HEK293 (cell line): ENCODE measurements at regions of chr17 and their contacts with region 1.

Region 1: DNA sequence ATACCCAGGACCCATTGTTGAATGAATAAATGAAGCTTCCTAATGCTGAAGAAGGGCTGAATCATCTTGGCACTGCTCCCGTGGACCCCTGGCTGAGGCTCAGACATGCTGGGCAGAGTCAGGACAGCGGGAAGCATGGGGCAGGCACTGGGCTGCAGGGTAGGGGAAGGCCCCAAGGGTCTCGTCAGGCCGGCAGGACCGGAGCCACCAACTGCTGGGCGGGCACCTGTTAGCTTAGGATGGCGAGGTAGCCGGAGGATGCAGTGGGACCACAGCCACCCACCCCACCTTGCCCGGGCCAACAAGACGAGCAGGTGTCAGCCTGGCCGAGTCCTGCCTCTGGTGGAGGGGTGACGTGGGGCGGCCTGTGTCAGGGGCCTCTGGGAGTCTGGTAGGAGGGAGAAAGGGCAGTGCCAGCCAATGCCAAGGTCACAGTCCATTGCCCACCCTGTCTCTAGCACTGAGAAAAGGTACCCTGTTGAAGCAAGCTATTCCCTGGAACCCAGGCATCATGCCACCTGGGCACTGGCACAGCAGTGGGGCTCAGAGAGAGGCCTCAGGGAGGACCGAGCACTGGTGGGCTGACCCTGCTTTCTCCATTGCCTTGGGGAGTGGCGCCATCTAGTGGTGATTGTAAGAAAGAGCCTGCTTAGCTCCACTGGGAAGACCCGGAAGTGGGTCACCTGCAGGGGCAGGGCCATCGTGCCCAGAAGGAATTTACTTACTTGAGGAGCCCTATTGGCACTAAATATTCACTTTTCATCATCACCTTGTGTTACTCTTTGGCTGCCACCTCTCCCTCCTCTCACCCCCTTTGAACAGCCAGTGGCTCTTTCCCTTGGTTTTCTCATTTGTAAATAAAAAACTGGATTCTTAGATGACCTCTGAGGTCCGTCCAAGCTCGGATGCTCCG is 3.0 kb upstream of the DLX3 start:
- H3K4me3 ChIP-seq: no peak overlapping the region
- H3K27ac ChIP-seq: no peak overlapping the region
- H3K4me1 ChIP-seq: peaks cover 4% of the 10 kb centered on the region
- CTCF ChIP-seq: peak; percentile 95

Region 2: DNA sequence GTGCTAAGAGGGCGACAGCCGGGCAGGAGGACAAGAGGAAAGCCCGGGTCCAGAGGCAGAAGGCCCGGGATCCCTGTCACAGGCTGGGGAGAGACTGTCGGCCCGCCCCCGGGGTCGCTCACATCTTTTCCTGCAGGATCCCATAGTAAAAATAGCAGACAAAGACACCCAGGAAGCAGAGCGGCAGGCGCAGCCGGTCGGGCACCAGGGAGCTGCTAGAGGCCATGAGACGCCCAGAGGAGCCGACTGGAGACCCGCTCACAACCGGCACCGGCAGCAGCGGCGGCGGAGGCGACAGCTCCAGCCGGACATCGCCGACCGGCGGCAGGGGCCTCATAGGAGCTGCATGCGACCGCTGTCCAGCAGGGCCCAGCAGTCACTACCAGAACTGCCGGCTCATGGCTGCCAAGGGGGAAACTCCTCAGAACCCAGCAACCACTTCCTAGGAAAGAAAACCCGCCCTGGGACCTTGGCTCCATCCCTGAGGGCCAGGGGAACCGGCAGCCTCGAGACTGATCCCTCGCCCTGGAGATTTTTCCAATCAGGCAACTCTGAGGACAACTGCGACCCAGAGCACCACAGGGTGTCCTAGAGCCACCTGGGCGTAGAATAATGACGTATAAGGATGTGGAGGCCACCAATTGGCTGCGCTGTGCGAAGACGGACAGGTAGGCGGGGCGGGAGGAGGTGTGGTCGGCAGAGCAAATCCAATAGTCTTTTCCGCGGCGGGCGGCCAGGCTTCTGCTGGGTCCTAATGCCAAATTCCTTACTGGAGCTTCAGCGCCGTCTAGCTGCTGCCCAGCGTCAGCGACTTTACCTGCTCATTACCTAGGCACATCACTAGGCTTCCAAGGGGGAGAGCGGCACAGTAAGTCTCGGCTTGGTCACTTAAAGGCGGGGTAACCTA is 290.2 kb before region 1 on chr17 and contains the start of gene SLC35B1:
- CTCF ChIA-PET with region 1: interaction called, 42 read pairs
- POLR2A ChIA-PET with region 1: interaction called, 3 read pairs
- H3K4me3 ChIP-seq: peak within 1 kb of the TSS; percentile 88
- H3K27ac ChIP-seq: peak within 1 kb of the TSS; percentile 93
- H3K4me1 ChIP-seq: no peaks in the 10 kb centered on the region
- CTCF ChIP-seq: peak; percentile 99

Region 3: DNA sequence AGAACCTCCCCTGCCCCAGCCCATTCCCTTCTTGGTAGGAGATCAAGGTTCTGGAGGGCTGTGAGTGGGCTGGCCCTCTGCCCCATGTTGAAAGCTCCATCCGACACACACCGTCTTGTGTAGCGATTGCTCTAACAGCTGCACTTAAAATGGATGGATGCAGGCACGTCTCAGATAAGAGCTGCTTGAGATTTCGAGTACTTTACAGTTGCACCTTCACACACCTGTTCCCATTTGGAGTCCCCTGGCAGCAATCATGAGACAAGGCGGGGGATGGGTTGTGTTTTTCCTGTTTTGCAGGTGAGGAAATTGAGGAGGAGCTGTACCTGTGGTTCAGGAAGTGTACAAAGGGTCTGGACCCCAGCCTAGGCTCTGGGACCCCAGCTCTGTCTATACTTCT is 124.6 kb before region 1 on chr17:
- CTCF ChIA-PET with region 1: interaction called, 526 read pairs
- POLR2A ChIA-PET with region 1: no interaction called
- H3K4me3 ChIP-seq: no peak overlapping the region
- H3K27ac ChIP-seq: no peak overlapping the region
- H3K4me1 ChIP-seq: no peaks in the 10 kb centered on the region
- CTCF ChIP-seq: no peak

Region 4: DNA sequence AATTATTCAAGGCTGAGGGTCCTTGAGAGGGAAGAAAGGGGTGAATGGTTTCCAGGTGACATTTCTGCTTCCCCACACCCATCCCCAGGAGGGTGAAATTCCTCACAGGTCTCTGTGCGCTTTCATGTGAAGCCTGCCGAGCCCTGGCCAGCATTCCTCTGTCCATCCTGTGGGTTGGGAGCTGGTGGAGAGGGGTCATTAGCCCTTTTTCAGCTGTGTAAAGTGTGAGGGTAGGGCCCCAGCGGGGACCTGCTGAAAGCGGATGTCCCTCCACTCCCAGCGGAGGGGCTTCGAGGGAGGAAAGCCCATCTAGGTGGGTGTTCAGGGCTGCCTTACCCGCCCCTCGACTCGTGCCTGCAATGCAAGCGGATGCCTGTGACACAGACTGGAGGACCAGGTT is 82.4 kb before region 1 on chr17:
- CTCF ChIA-PET with region 1: interaction called, 38 read pairs
- POLR2A ChIA-PET with region 1: interaction called, 7 read pairs
- H3K4me3 ChIP-seq: no peak overlapping the region
- H3K27ac ChIP-seq: no peak overlapping the region
- H3K4me1 ChIP-seq: no peaks in the 10 kb centered on the region
- CTCF ChIP-seq: no peak

Region 5: GRCh38 chr17:49952209-49952911 is 45.7 kb before region 1 on chr17:
- CTCF ChIA-PET with region 1: interaction called, 196 read pairs
- POLR2A ChIA-PET with region 1: interaction called, 17 read pairs
- H3K4me3 ChIP-seq: no peak overlapping the region
- H3K27ac ChIP-seq: no peak overlapping the region
- H3K4me1 ChIP-seq: no peaks in the 10 kb centered on the region
- CTCF ChIP-seq: peak; percentile 84

Region 6: DNA sequence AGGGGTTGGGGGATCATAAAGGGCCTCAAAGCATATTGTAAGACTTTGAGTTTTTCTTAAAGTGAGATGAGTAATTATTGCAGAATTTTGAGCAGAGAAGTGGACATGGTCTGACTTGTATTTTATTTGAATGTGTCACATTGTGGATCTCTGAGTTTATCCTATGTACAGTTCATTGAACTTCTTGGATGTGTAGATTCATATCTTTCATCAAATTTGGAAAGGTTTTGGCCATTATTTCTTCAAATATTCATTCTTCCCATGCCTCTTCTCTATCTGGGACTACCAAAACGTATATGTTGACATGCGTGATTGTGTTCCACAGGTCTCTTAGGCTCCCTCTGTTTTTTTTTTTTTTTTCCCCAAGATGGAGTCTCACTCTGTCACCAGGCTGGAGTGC is 11.2 kb after region 1 on chr17:
- CTCF ChIA-PET with region 1: interaction called, 27 read pairs
- POLR2A ChIA-PET with region 1: no interaction called
- H3K4me3 ChIP-seq: no peak overlapping the region
- H3K27ac ChIP-seq: no peak overlapping the region
- H3K4me1 ChIP-seq: no peaks in the 10 kb centered on the region
- CTCF ChIP-seq: no peak

Region 7: DNA sequence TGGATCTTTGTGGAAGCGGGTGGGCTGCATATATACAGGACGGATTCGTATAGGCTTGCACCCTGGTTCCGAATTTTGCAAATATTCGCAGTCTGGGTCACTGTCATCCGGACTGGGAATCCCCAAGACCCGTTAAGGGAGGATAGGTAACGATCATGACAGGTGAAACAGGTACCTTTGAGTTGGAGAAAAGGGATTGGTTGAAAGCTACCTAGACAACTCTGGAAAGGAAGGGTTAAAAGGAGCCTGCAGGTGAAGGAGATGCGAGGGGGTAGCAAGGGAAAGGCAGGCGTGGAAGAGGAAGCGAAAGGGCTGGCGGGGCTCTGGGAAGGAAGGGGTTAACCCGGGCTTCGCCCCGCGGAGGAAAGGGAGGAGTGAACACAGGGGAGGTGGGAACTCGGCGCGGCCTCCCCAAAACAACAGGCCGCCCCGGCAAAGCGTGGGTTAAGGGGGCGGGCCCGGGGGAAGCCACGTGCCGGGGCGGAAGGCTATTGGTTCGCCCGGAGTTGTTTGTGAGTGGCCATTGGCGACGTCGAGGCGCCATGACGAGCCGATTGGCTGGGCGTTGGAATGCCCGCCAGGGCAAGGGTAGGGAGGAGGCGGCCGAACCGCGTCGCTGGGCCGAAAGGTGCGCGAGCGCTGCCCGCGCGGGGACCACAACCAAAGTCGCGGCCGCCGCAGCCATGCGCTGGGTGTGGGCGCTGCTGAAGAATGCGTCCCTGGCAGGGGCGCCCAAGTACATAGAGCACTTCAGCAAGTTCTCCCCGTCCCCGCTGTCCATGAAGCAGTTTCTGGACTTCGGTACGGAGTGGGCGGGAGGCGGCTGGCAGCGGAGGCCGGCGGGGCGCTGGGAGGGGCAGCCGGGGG is 96.9 kb after region 1 on chr17 and contains the start of gene PDK2:
- CTCF ChIA-PET with region 1: interaction called, 47 read pairs
- POLR2A ChIA-PET with region 1: no interaction called
- H3K4me3 ChIP-seq: peak within 1 kb of the TSS; percentile 85
- H3K27ac ChIP-seq: peak within 1 kb of the TSS; percentile 45
- H3K4me1 ChIP-seq: peaks cover 2% of the 10 kb centered on the region; the same call in 1 of the 2 replicates
- CTCF ChIP-seq: no peak; the same call in none of the 2 replicates

Region 8: DNA sequence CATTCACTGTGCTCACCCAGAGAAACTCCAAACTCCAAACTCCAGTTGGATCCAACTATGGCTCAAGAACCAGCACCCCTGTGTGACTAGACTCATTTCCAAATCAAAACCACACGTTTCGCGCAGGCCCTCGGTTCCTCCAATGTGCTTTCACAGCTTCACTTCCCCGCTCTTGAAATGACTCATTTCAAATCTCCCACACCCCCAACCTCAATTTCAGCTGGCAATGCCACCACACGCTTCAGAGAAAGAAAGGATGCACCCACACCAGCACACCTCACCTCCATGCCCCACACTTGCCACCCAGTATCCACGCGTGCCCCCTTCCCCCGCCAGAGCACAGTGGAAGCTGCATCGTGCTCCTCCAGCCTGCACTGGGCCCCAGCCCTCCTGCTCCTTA is 285.2 kb after region 1 on chr17:
- CTCF ChIA-PET with region 1: no interaction called
- POLR2A ChIA-PET with region 1: no interaction called
- H3K4me3 ChIP-seq: no peak overlapping the region
- H3K27ac ChIP-seq: no peak overlapping the region
- H3K4me1 ChIP-seq: peaks cover 5% of the 10 kb centered on the region; the same call in 1 of the 2 replicates
- CTCF ChIP-seq: no peak